IMR-90 (cell line): ENCODE measurements at regions of chr1 and their contacts with region 1.

Region 1: DNA sequence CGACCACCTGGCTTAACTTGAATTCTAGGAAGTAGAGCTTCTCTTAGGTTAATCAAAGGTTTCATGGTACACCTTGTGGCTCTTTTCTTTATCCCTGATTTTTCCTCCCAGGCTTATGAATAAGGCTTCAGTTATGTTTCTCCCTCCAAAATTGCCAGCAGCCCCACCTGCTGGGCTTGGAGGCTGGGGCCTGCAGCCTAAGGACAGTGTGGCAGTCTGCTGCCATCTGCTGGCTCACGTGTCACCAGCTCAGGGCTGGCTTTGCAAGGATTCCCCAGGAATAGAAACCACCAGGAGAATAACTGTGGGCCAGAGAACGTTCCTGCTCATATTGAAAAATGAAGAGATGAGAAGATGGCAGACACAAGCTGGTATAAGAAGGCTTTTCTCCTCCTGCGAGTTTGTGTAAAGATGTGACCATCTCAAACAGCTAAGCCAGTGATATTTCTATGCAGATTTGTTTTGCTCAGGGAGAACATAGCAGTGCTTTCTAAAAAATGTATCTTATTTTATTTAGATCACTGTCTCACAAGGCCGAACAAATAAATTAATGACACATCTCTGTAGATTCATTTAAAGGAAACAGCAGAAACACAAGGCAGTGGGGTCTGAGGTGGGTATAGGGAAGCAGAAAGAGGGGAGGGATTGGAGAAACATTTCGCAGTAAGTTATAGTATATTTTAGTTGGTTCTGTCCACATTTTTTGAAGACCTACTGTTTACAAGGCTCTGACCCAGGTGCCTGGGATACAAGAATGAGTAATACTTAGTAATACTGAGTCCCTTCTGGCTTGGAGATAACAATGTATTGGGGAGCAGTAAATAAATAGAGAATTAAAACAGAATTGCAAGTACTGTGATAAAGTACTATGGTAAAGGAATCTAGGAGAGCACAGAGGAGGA is 291.1 kb upstream of the SGIP1 start:
- DNase-seq: peak; percentile 87
- ATAC-seq: peak; percentile 87
- H3K4me3 ChIP-seq: no peak overlapping the region
- H3K27ac ChIP-seq: no peak overlapping the region
- H3K4me1 ChIP-seq: peaks cover 7% of the 10 kb centered on the region
- H3K27me3 ChIP-seq: no peaks in the 10 kb centered on the region
- CTCF ChIP-seq: peak; percentile 100; the same call in 1 of the 2 replicates
- POLR2A ChIP-seq: no peak
- RAD21 ChIP-seq: peak; percentile 95

Region 2: DNA sequence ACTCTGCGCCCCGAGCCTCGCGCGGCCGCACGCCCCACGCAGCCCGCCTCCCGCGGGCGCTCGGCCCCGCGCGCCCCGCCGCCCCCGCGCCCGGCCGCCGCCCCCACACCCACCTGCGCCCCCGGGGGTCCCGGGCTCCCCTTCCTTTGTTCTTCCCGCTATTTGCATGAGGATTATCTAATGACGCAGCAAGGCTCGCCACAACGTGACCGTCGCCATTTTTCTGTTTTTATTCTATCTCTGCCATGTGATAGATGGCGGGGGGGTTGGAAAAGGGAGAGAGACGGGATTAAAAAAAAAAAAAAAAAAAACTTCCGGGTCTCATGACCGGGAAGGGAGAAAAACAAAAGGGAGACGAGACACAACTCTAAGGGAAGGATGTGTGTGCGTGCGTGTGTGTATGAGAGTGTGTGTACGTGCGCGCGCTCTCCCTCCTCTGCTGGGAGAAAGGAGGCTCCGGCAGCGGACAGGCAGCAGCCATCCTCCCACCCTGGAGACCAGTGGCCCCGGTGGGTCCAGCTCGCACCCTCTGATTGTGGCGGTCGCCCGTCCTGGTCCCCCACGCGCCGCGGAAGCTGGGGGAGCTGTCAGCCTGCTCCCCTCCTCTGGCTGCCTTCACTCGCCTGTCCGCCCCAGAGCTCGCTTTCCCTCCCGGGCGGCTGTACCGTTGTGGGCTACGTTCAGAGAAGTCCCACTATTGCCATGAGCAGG is 1175.3 kb before region 1 on chr1:
- CTCF ChIA-PET with region 1: no interaction called
- POLR2A ChIA-PET with region 1: no interaction called
- dilution Hi-C with region 1: no loop called
- in situ Hi-C with region 1: no loop called
- intact Hi-C with region 1: loop called (anchors 10 kb)
- DNase-seq: peak; percentile 56
- ATAC-seq: peak; percentile 30
- H3K4me3 ChIP-seq: peak overlapping the region; percentile 58
- H3K27ac ChIP-seq: peak overlapping the region; percentile 51
- H3K4me1 ChIP-seq: peaks cover 4% of the 10 kb centered on the region; the same call in 1 of the 2 replicates
- H3K27me3 ChIP-seq: peaks cover 5% of the 10 kb centered on the region; the same call in 1 of the 2 replicates
- CTCF ChIP-seq: no peak
- POLR2A ChIP-seq: no peak
- RAD21 ChIP-seq: no peak

Region 3: DNA sequence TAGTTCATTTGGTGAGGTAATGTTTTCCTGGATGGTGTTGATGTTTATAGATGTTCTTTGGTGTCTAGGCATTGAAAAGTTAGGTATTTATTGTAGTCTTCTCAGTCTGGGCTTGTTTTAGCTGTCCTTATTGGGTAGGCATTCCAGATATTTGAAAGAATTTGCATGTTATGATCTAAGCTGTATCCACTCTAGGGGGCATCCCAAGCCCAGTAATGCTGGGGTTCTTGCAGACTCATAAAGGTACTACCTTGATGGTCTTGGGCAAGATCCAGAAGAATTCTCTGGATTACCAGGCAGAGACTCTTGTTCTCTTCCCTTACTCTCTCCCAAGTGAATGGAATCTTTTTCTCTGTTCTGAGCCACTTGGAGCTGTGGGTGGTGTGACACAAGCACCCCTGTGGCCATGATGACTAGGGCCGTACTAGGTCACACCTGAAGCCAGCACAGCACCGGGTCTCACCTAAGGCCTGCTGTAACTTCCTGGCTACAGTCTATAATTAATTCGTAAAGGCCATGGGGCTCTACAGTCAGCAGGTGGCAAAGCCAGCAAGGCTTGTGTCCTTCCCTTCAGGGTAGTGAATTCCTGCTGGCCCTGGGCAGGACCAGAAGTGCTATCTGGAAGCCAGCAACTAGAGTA is 525.0 kb before region 1 on chr1:
- CTCF ChIA-PET with region 1: no interaction called
- POLR2A ChIA-PET with region 1: no interaction called
- dilution Hi-C with region 1: no loop called
- in situ Hi-C with region 1: no loop called
- intact Hi-C with region 1: loop called (anchors 1 kb)
- DNase-seq: peak; percentile 66
- ATAC-seq: peak; percentile 81
- H3K4me3 ChIP-seq: no peak overlapping the region
- H3K27ac ChIP-seq: no peak overlapping the region
- H3K4me1 ChIP-seq: no peaks in the 10 kb centered on the region
- H3K27me3 ChIP-seq: no peaks in the 10 kb centered on the region; the same call in 1 of the 2 replicates
- CTCF ChIP-seq: peak; percentile 59
- POLR2A ChIP-seq: no peak
- RAD21 ChIP-seq: peak; percentile 78

Region 4: DNA sequence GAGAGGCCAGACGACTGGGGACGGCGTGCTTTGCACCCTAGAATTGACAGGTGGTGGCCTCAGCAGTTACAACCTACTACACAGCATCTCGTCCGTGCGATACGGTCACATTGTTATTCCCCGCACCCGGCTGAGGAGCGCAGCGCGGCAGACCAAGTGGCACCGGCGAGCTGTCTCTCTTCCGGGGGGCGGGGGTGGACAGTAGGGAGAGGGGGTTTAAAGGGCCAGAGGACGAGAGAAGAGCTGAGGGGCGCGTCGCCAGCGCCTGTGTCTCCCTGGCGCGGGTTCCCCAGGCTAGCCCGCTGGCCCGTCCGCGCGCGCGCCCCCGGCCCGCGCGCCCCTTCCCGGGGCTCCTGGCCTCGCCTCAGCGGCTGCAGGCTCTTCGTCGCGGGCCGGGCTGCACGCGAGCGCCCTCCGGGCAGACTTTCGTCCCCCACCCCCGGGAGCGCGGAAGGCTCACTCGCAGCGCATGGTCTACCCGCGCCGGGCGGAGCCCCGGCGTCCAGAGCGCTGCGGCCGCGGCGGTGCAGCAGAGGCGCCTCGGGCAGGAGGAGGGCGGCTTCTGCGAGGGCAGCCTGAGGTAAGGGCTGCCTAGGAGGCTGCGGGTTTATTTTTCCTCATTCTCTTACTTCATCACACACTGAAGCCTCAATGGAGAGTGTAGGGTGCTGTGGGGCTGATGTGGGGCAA is 450.1 kb before region 1 on chr1 and contains the start of gene PDE4B:
- CTCF ChIA-PET with region 1: no interaction called
- POLR2A ChIA-PET with region 1: no interaction called
- dilution Hi-C with region 1: no loop called
- in situ Hi-C with region 1: no loop called
- intact Hi-C with region 1: loop called (anchors 10 kb)
- DNase-seq: peak; percentile 40
- ATAC-seq: peak; percentile 83
- H3K4me3 ChIP-seq: peak within 1 kb of the TSS; percentile 53
- H3K27ac ChIP-seq: no peak within 1 kb of the TSS
- H3K4me1 ChIP-seq: peaks cover 2% of the 10 kb centered on the region; the same call in 1 of the 2 replicates
- H3K27me3 ChIP-seq: peaks cover 4% of the 10 kb centered on the region
- CTCF ChIP-seq: no peak
- POLR2A ChIP-seq: no peak
- RAD21 ChIP-seq: no peak
- total RNA-seq, gene PDE4B: 15.6 and 21.3 TPM in 2 replicates

Region 5: GRCh38 chr1:65958561-65959350 is 284.1 kb before region 1 on chr1:
- CTCF ChIA-PET with region 1: interaction called, 43 read pairs
- POLR2A ChIA-PET with region 1: no interaction called
- dilution Hi-C with region 1: no loop called
- in situ Hi-C with region 1: loop called (anchors 5 kb)
- intact Hi-C with region 1: loop called (anchors 1 kb)
- DNase-seq: peak; percentile 60
- ATAC-seq: peak; percentile 62; the same call in 1 of the 2 replicates
- H3K4me3 ChIP-seq: no peak overlapping the region
- H3K27ac ChIP-seq: no peak overlapping the region
- H3K4me1 ChIP-seq: no peaks in the 10 kb centered on the region
- H3K27me3 ChIP-seq: no peaks in the 10 kb centered on the region
- CTCF ChIP-seq: peak; percentile 84
- POLR2A ChIP-seq: no peak
- RAD21 ChIP-seq: peak; percentile 87

Region 6: DNA sequence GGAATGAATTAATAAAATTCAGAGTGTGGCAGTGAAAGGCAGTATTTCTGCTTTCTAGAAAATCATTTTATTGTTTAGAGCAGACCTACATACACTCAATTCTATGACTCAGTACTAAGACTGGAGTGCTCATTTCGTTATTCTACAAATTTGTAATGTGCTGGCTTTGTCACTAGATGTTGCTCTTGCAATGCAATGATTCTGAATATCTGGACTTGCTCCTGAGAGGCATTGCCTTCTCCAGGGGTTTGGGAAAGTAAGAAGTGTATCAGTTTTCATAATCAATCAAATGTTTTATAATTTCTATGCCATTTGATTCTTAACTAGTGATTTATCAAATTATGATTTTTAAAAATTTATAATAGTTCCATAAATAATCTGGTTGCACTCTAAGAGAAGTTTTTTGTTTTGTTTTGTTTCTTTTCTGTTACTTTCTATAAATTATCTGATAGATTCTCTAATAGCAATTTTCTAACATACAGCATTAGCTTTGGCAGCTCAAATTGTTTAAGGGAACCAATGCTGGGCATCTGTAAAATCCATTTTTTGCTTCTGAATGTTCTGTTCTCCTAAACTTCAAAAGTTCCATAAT is 10.5 kb after region 1 on chr1:
- CTCF ChIA-PET with region 1: interaction called, 11 read pairs
- POLR2A ChIA-PET with region 1: no interaction called
- dilution Hi-C with region 1: no loop called
- in situ Hi-C with region 1: no loop called
- intact Hi-C with region 1: no loop called
- DNase-seq: peak; percentile 85
- ATAC-seq: peak; percentile 96
- H3K4me3 ChIP-seq: no peak overlapping the region
- H3K27ac ChIP-seq: no peak overlapping the region
- H3K4me1 ChIP-seq: peaks cover 8% of the 10 kb centered on the region
- H3K27me3 ChIP-seq: no peaks in the 10 kb centered on the region
- CTCF ChIP-seq: peak; percentile 95
- POLR2A ChIP-seq: peak; percentile 45; the same call in 1 of the 2 replicates
- RAD21 ChIP-seq: peak; percentile 99